ENCODE measurements at regions of chr9 and their contacts with region 1.

Region 1: DNA sequence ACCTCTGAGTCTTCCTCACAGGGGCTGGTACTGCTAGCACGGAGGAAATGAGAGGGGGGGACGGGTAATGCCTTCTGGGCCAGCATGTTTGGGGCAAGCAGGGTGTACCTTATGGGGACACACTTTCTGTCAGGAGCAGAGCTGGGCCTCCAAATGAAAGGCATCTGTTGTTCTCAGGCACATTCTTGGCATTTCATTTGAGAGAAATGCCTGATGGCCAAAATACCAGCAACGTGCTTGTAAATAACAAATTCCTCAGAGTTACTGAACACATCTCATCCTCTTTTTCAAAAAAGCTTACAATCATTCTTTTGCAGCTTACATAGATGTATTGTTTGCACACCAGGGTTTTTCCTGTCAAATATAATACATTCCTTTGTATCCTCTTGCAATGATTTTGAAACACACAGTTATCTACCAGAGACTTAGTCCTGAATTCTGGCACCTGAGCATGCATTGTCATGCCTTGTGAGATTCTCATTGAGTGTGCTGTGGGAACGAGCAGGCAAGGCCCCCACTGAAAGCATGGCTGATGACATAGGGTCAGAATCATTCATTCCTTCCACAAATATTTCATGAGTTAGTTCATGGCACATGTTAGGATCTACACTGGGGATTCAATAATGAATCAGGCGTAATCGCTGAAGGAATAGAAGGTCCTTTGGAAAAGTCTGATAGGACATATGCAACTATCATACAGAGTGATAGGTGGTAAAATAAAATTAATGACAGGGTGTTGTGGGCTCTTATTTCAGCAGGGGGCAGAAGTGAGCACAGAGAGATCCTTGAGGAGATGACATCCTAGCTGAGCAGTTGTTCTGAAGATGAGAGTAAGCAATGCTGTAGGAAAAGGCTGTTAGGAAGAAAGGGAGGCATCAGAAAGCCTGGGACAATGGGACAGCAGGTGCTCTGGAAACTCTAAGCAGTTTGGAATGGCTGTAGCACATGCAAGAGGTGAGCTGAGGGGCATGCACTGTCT is 260.9 kb upstream of the TUT7 start:
- DNase-seq: peak in 1 of 2 donors; percentile 2
- H3K4me3 ChIP-seq: no peak overlapping the region
- H3K27ac ChIP-seq: peak overlapping the region in 1 of 3 donors; percentile 3
- H3K4me1 ChIP-seq: peaks cover 0 to 5% of the 10 kb centered on the region in 2 donors
- H3K27me3 ChIP-seq: no peaks in the 10 kb centered on the region
- CTCF ChIP-seq: peak in 3 of 6 experiments; percentile 10 to 21 (median 18)
- POLR2A ChIP-seq: no peak

Region 2: GRCh38 chr9:86909388-86909787 is 294.2 kb after region 1 on chr9:
- intact Hi-C with region 1: no loop called
- DNase-seq: no peak
- H3K4me3 ChIP-seq: no peak overlapping the region
- H3K27ac ChIP-seq: no peak overlapping the region
- H3K4me1 ChIP-seq: no peaks in the 10 kb centered on the region
- H3K27me3 ChIP-seq: no peaks in the 10 kb centered on the region
- CTCF ChIP-seq: no peak
- POLR2A ChIP-seq: no peak

Region 3: DNA sequence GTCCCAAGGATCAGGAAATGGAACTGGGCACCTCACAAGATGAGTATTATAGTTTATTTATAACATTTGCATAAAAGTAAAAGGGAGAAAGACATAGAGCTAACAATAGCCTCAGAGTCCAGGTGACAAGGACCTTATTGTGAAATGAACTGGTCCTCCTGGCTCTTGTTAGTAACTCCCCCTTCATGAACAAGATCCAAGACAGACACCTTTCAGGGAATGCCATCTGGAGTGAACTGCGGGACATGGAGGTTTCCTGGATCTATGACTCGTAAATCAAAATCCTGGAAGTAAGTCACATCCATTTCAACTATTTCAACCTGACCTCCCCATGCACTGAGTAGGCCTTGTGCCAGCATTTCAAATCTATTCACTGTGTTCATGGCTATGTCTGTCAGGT is 461.7 kb after region 1 on chr9:
- intact Hi-C with region 1: loop called (anchors 5 kb)
- DNase-seq: no peak
- H3K4me3 ChIP-seq: no peak overlapping the region
- H3K27ac ChIP-seq: no peak overlapping the region
- H3K4me1 ChIP-seq: no peaks in the 10 kb centered on the region
- H3K27me3 ChIP-seq: no peaks in the 10 kb centered on the region
- CTCF ChIP-seq: no peak
- POLR2A ChIP-seq: no peak

Measured in thyroid gland (tissue), 4 donors.